ENCODE measurements at regions of chr10 and their contacts with region 1.

Region 1: GRCh38 chr10:61941202-61941681 is 39.7 kb downstream of the ARID5B start:
- DNase-seq: peak; percentile 86
- ATAC-seq: peak; percentile 64
- H3K4me3 ChIP-seq: peak overlapping the region in 2 of 5 experiments; percentile 10 to 30
- H3K4me3 Mint-ChIP-seq: peak overlapping the region; percentile 63
- H3K27ac ChIP-seq: peak overlapping the region; percentile 86 to 91
- H3K27ac Mint-ChIP-seq: peak overlapping the region; percentile 83
- H3K4me1 ChIP-seq: peaks cover 80 to 84% of the 10 kb centered on the region in 2 donors
- H3K4me1 Mint-ChIP-seq: peaks cover 77% of the 10 kb centered on the region
- H3K27me3 ChIP-seq: no peaks in the 10 kb centered on the region
- H3K27me3 Mint-ChIP-seq: no peaks in the 10 kb centered on the region
- CTCF ChIP-seq: no peak

Region 2: DNA sequence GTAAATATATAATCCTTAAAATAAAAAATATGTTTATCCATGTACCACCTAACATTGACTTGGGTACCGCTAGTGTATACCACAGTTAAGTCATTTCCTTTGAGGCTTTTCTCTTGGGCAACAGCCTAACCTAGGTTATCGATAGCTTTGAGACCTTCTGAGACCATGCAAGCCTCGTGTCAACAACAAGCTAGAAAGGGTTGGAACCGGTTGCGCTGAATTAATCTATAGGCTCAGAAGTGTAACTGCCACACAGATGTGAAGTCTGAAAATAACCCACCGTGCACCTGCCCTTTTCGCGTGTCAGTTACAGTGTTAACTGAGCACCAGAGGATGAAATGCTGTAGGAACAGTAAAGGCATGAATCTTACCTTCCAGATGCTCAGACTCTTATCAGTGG is 20.0 kb after region 1 on chr10:
- CTCF ChIA-PET with region 1: interaction called, 4 read pairs
- POLR2A ChIA-PET with region 1: no interaction called
- intact Hi-C with region 1: loop called (anchors 2 kb)
- DNase-seq: peak; percentile 63
- ATAC-seq: peak; percentile 51
- H3K4me3 ChIP-seq: peak overlapping the region in 1 of 5 experiments; percentile 3
- H3K4me3 Mint-ChIP-seq: peak overlapping the region; percentile 42
- H3K27ac ChIP-seq: peak overlapping the region; percentile 68 to 69
- H3K27ac Mint-ChIP-seq: peak overlapping the region; percentile 82
- H3K4me1 ChIP-seq: peaks cover 79 to 86% of the 10 kb centered on the region in 2 donors
- H3K4me1 Mint-ChIP-seq: peaks cover 85% of the 10 kb centered on the region
- H3K27me3 ChIP-seq: no peaks in the 10 kb centered on the region
- H3K27me3 Mint-ChIP-seq: no peaks in the 10 kb centered on the region
- CTCF ChIP-seq: no peak

Region 3: GRCh38 chr10:61987951-61988379 is 46.7 kb after region 1 on chr10:
- CTCF ChIA-PET with region 1: interaction called, 4 read pairs
- POLR2A ChIA-PET with region 1: interaction called, 3 read pairs
- intact Hi-C with region 1: loop called (anchors 1 kb)
- DNase-seq: peak; percentile 88
- ATAC-seq: peak; percentile 82
- H3K4me3 ChIP-seq: peak overlapping the region in 1 of 5 experiments; percentile 29
- H3K4me3 Mint-ChIP-seq: peak overlapping the region; percentile 88
- H3K27ac ChIP-seq: peak overlapping the region; percentile 84 to 88
- H3K27ac Mint-ChIP-seq: peak overlapping the region; percentile 99
- H3K4me1 ChIP-seq: peaks cover 47 to 61% of the 10 kb centered on the region in 2 donors
- H3K4me1 Mint-ChIP-seq: peaks cover 82% of the 10 kb centered on the region
- H3K27me3 ChIP-seq: no peaks in the 10 kb centered on the region
- H3K27me3 Mint-ChIP-seq: no peaks in the 10 kb centered on the region
- CTCF ChIP-seq: no peak

Region 4: DNA sequence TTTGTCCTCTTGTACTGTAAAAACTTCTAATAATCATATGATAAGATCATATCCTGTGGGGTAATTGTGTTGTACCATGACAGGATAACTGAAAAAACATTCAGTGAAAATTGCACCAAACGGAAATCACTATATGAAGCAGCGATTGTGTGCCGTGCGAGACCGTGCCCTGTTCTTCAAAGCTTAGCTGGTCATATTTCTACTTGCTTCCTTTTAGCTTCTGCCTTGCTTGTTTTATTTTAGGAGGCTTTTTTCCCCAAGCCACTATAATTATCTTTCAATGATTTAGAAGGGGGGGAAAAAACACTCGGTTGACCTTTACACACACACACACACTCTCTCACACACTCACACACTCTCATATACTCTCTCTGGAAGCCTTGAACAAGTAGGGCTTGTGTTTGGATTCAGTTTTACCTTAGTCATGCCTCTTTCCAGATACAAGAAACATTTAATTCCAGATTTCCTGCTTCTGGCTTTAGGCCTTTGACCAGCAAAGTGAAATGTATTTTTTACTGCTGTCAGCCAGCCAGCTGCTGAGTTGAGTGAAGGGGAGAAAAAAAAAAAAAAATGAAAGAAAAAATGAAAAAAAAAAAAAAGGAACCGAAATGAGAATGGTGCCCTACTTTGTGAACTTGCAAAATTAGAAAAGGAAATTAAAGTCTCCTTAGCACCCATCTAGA is 141.6 kb after region 1 on chr10:
- CTCF ChIA-PET with region 1: no interaction called
- POLR2A ChIA-PET with region 1: no interaction called
- intact Hi-C with region 1: no loop called
- DNase-seq: no peak
- ATAC-seq: peak; percentile 29
- H3K4me3 ChIP-seq: peak overlapping the region; percentile 10 to 38 (median 36)
- H3K4me3 Mint-ChIP-seq: peak overlapping the region; percentile 79
- H3K27ac ChIP-seq: peak overlapping the region; percentile 90 to 91
- H3K27ac Mint-ChIP-seq: peak overlapping the region; percentile 86
- H3K4me1 ChIP-seq: peaks cover 76 to 78% of the 10 kb centered on the region in 2 donors
- H3K4me1 Mint-ChIP-seq: peaks cover 79% of the 10 kb centered on the region
- H3K27me3 ChIP-seq: no peaks in the 10 kb centered on the region
- H3K27me3 Mint-ChIP-seq: no peaks in the 10 kb centered on the region
- CTCF ChIP-seq: no peak

Measured in B cell (primary cell).